Common myeloid progenitor, CD34-positive (primary cell): ENCODE measurements at regions of chr10 and their contacts with region 1.

Region 1: DNA sequence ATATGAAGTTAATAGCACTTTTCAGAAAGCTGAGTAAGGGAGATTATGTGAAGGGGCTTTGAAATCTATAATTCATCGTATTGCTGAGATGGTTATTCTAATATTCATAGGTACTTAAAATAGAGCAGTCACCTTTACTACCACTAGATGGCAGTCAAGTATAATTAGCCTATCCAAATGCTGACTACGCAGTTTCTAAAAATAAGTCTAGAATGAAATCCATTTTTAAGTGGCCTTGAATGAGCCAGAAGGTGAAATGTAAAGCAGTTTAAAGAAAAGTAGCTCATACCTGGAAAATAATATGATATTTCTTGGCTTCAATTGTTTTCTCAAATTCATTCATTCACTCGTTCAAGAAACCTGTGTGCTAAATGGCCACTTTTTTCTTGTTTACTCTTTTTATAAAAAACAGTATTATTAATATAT is 1277.1 kb downstream of the GATA3 start:
- DNase-seq: peak; percentile 57 to 82 (median 79)
- H3K4me3 ChIP-seq: no peak overlapping the region
- H3K27ac ChIP-seq: no peak overlapping the region
- H3K4me1 ChIP-seq: no peaks in the 10 kb centered on the region
- H3K27me3 ChIP-seq: no peaks in the 10 kb centered on the region

Region 2: GRCh38 chr10:9274206-9274755 is 57.3 kb before region 1 on chr10:
- CTCF ChIA-PET with region 1: no interaction called
- POLR2A ChIA-PET with region 1: no interaction called
- DNase-seq: no peak
- H3K4me3 ChIP-seq: no peak overlapping the region
- H3K27ac ChIP-seq: no peak overlapping the region
- H3K4me1 ChIP-seq: peaks cover 0 to 3% (median 0%) of the 10 kb centered on the region in 4 experiments
- H3K27me3 ChIP-seq: no peaks in the 10 kb centered on the region

Region 3: GRCh38 chr10:9315292-9315691 is 16.3 kb before region 1 on chr10:
- CTCF ChIA-PET with region 1: interaction called, 15 read pairs
- POLR2A ChIA-PET with region 1: no interaction called
- DNase-seq: no peak
- H3K4me3 ChIP-seq: no peak overlapping the region
- H3K27ac ChIP-seq: no peak overlapping the region
- H3K4me1 ChIP-seq: no peaks in the 10 kb centered on the region
- H3K27me3 ChIP-seq: no peaks in the 10 kb centered on the region

Region 4: DNA sequence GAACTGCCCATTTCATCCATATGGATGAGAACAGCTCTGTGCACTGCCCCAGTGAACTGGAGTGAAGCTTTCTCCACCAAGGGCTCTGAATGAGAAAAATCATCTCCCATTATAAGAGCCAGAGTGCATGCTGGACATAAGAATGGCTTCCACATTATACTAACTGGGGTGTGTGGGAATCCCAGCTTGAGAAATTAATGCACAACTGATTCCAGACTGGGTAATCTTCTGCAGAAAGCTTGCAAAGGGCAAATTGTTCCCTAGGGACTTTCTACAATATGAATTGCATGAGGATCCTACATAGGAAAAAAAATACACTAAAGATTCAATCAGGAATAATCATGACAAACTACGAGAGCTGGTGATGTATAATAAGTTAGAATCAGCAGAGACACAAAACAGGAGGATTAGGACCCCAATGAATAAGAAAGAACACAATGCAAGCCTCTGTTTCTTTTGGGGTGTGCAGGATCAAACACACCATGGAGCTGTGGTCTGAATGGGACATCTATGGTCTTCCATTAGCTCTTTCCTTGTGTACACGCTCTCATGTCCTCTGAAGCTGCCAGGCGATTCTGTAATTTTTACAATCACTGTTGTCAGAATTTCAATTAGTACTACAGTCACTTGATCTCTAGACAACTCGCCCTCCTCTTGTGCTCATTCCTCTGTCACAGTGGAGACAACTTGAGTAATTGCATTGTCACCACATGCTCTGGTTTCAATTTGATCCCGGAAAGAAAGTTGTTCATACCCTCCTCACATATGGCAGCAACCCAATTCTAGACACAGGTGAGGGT is 50.3 kb after region 1 on chr10:
- CTCF ChIA-PET with region 1: no interaction called
- POLR2A ChIA-PET with region 1: no interaction called
- DNase-seq: no peak
- H3K4me3 ChIP-seq: no peak overlapping the region
- H3K27ac ChIP-seq: no peak overlapping the region
- H3K4me1 ChIP-seq: no peaks in the 10 kb centered on the region
- H3K27me3 ChIP-seq: no peaks in the 10 kb centered on the region

Region 5: GRCh38 chr10:9944690-9945089 is 613.1 kb after region 1 on chr10:
- CTCF ChIA-PET with region 1: no interaction called
- POLR2A ChIA-PET with region 1: no interaction called
- DNase-seq: no peak
- H3K4me3 ChIP-seq: no peak overlapping the region
- H3K27ac ChIP-seq: no peak overlapping the region
- H3K4me1 ChIP-seq: no peaks in the 10 kb centered on the region
- H3K27me3 ChIP-seq: no peaks in the 10 kb centered on the region